Heart left ventricle (tissue), 16 donors: ENCODE measurements at regions of chr16 and their contacts with region 1.

Region 1: GRCh38 chr16:56964243-56965148 is 2.7 kb downstream of the CETP start:
- DNase-seq: peak; percentile 87 to 95 (median 88)
- ATAC-seq: peak; percentile 56 to 73 (median 68)
- H3K4me3 ChIP-seq: peak overlapping the region in 1 of 12 donors; percentile 12
- H3K27ac ChIP-seq: peak overlapping the region in 2 of 12 donors; percentile 37 to 78
- H3K4me1 ChIP-seq: peaks cover 9 to 63% (median 38%) of the 10 kb centered on the region in 12 donors
- H3K27me3 ChIP-seq: no peaks in the 10 kb centered on the region
- CTCF ChIP-seq: peak; percentile 80 to 100 (median 94)
- POLR2A ChIP-seq: no peak

Region 2: DNA sequence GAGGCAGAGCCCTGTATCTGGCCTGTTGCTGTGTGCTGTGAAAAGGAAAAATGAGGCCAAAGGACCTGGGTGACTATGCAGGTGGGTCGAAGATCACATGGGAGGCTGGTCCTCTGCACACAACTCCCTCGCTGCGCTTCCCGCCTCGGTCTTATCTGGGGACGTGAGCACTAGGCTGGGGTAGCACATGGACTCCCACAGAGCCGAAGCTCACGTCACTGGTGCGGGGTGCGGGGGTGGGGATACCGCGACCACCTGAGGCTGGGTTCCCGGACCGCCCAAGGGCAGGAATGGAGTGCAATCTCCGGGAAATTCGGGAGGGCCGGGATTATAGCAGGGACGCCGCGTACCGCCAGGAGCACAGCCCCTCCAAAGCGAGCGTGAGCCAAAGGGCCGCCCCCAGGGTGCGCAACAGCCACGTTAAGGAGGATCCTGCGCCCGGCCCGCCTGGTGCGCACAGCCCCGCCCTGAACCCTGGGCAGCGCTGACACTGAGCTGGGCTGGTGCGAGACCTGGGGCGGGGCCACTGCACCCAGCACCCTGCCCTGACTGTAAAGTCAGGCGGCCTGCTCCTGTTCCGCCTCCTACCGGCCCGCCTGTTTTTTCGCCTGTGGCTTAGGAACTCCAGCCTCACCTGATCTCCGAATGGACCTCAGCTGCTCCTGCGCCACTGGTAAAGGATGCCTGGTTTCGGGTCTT is 321.3 kb before region 1 on chr16:
- intact Hi-C with region 1: no loop called
- DNase-seq: peak; percentile 59 to 85 (median 79)
- ATAC-seq: peak; percentile 91 to 94 (median 92)
- H3K4me3 ChIP-seq: peak overlapping the region in 10 of 12 donors; percentile 24 to 55 (median 43)
- H3K27ac ChIP-seq: peak overlapping the region in 4 of 12 donors; percentile 9 to 41 (median 36)
- H3K4me1 ChIP-seq: peaks cover 0 to 26% (median 16%) of the 10 kb centered on the region in 12 donors
- H3K27me3 ChIP-seq: peaks cover 0 to 86% (median 31%) of the 10 kb centered on the region in 9 donors
- CTCF ChIP-seq: peak; percentile 15 to 58 (median 42)
- POLR2A ChIP-seq: no peak

Region 3: DNA sequence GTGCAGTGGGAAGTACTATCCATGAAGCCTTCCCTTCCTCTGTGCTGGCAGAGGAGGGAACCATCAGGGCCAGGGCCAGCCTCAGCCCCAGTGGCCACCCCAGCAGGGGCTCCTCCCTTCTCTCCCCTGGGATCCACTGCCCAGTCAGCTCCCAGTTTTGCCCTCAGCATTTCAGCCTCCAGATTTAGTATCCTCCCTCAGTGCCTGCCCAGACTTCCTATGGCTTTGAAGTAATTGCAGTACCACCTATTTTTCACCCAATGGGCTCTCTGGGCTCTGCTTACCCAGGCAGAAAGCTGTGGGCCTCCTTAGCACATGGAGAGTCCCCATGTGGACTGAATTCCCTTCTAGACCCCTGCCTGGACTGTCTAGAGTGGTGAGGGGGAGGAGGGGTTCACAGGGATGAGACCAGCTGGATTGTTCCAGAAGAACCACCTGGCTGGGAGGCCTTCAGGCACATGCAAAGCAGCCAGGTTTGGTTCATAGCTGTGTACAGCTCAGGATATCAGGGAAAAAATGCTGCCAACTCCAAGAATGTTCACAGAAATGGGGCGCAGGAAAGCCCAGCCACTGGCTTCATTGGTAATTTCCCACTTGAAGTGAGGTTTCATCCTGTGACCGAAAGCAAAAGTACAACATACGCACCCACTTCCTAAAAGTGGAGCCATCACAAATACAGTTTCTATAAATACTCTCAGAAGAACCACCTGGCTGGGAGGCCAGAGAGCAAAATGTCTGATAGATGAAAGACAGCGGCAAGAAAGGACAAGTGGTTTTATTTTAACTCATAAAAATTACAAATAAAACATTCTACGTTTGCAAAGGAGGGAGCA is 47.7 kb before region 1 on chr16:
- intact Hi-C with region 1: no loop called
- DNase-seq: no peak
- ATAC-seq: peak in 2 of 4 donors; percentile 33 to 56
- H3K4me3 ChIP-seq: no peak overlapping the region
- H3K27ac ChIP-seq: peak overlapping the region in 11 of 12 donors; percentile 27 to 81 (median 62)
- H3K4me1 ChIP-seq: peaks cover 0 to 59% (median 32%) of the 10 kb centered on the region in 12 donors
- H3K27me3 ChIP-seq: no peaks in the 10 kb centered on the region
- CTCF ChIP-seq: no peak
- POLR2A ChIP-seq: no peak

Region 4: DNA sequence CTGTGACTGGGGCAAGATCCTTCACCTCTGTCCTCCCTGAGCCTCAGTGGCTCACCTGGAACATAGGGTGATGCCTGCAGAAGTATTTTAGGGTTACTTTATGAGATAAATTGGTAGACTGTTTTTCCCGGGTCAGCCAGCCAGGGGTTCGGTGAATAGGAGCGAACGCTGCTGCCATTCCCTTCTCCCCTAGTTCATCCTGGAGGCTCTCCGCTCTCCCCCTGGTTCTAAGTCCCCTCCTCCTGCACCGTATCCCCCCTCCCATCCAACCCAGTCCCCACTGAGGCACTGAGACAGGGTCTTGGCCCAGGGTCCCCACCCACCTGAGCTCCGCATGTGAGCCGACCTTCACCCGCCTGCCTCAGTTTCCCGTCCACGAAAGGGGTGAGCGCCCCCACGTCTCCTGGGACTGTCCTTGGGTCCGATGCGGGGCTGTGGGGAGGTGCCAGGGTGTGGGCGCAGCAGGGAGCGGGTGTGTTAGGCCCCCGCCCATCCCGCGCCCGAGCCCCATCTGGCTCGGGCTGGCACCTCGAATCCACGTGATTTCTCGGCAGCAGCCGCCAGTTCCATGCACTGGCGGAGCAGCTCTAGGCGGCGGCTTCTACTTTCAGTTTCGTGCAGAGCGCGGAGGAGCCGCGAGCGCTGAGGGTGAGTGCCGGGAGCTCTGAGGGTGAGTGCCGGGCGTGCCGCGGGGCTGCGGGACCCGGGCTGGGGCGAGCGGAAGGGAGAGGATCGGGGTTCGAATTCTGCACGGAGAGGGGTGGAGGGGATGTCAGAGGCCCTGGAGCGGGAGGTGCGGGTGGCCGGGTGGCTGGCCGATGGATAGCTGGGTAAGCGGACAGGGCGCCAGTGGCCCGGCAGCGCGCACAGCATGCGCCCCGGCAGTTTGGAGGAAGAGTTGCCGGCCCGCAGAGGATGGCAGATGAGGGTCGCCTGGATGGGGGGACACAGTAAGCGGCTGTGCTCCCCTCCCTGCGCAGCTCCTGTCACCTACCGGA is 24.8 kb after region 1 on chr16 and contains the start of gene NLRC5:
- intact Hi-C with region 1: loop called in 1 of 10 experiments (anchors 2 kb)
- DNase-seq: peak; percentile 86 to 94 (median 90)
- ATAC-seq: peak; percentile 79 to 92 (median 86)
- H3K4me3 ChIP-seq: peak within 1 kb of the TSS; percentile 49 to 96 (median 84)
- H3K27ac ChIP-seq: peak within 1 kb of the TSS; percentile 28 to 96 (median 86)
- H3K4me1 ChIP-seq: peaks cover 0 to 87% (median 34%) of the 10 kb centered on the region in 12 donors
- H3K27me3 ChIP-seq: no peaks in the 10 kb centered on the region
- CTCF ChIP-seq: peak in 2 of 12 donors; percentile 2 to 7
- POLR2A ChIP-seq: peak in 1 of 2 donors; percentile 84
- total RNA-seq, gene NLRC5: 5.8 to 98.6 (median 9.9) TPM

Region 5: GRCh38 chr16:57017251-57017650 is 52.8 kb after region 1 on chr16:
- intact Hi-C with region 1: loop called in 2 of 10 experiments (anchors 2 to 5 kb)
- DNase-seq: no peak
- ATAC-seq: peak in 3 of 4 donors; percentile 25 to 65 (median 31)
- H3K4me3 ChIP-seq: no peak overlapping the region
- H3K27ac ChIP-seq: peak overlapping the region in 2 of 12 donors; percentile 13 to 37
- H3K4me1 ChIP-seq: peaks cover 0 to 42% (median 6%) of the 10 kb centered on the region in 12 donors
- H3K27me3 ChIP-seq: no peaks in the 10 kb centered on the region
- CTCF ChIP-seq: no peak
- POLR2A ChIP-seq: no peak

Region 6: DNA sequence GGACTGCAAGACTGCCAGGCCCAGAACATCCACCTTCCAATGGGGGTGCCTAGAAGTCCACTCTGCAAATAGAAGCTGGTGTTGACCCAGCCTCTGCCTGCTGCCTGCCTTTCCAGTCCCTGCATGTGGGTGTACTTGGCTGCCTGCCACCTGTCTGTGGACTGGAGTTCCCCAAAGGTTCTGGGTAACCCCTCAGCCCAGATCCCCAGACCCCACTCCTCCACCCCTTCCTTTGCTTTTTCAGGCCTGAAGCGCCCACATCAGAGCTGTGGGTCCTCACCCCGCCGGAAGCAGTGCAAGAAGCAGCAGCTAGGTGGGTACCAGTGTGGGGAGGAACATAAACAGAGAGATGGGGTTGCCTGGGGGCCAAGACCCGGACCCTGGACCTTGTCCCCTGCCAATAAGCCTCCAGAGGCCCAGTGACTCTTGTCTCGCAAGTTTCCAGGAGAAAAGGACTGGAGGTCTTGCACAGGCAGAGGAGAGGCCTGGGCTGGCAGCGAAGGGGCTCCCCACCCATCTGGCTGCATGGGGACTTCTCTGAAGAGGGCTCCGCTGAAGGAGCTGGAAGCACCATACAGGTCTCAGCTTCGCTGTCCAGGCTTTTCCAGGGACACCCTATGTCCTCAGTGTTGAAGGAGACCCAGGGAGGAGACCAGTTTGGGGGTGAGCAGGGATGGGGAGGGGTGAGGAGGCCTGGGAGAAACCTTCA is 59.2 kb after region 1 on chr16:
- intact Hi-C with region 1: loop called in 1 of 10 experiments (anchors 5 kb)
- DNase-seq: no peak
- ATAC-seq: no peak
- H3K4me3 ChIP-seq: no peak overlapping the region
- H3K27ac ChIP-seq: peak overlapping the region in 1 of 12 donors; percentile 37
- H3K4me1 ChIP-seq: peaks cover 0 to 28% (median 0%) of the 10 kb centered on the region in 12 donors
- H3K27me3 ChIP-seq: no peaks in the 10 kb centered on the region
- CTCF ChIP-seq: no peak
- POLR2A ChIP-seq: no peak

Region 7: DNA sequence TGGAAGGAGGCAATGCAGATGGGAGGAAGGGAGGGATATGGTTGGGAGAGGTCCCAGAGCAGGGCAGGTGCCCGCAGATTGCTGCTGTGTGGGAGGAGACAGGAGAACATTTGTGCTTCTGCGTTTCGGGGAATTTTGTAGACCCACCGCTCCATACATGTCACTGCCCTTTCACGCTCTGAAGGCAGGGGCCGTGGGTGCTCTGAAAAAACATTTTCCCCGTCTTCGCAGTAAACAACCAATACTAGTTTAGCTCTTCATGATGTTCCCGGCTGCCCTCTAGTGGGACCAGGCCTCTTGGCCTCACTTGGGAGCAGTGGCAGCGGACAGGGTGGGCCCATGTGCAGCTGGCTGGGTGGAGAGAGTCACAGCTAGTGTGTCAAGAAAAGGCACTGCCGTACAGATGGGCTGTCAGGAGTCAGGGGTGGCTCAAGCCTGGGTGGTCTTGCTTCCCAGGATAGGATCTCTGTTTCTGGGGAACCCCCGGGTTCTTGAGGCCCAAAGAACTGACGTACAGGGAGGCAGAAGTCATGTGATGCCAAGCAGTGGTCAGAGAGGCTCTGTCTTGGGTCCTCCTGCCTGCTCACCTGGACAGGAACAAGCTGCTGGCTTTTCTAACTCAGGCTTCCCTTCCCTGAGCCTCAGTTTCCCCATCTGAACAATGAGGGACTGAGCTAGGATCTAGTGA is 81.3 kb after region 1 on chr16:
- intact Hi-C with region 1: loop called in 9 of 10 experiments (anchors 1 to 10 kb)
- DNase-seq: peak; percentile 63 to 84 (median 67)
- ATAC-seq: peak; percentile 50 to 86 (median 78)
- H3K4me3 ChIP-seq: peak overlapping the region in 4 of 12 donors; percentile 9 to 29 (median 24)
- H3K27ac ChIP-seq: no peak overlapping the region
- H3K4me1 ChIP-seq: peaks cover 0 to 23% (median 6%) of the 10 kb centered on the region in 12 donors
- H3K27me3 ChIP-seq: no peaks in the 10 kb centered on the region
- CTCF ChIP-seq: peak; percentile 34 to 79 (median 62)
- POLR2A ChIP-seq: no peak

Region 8: DNA sequence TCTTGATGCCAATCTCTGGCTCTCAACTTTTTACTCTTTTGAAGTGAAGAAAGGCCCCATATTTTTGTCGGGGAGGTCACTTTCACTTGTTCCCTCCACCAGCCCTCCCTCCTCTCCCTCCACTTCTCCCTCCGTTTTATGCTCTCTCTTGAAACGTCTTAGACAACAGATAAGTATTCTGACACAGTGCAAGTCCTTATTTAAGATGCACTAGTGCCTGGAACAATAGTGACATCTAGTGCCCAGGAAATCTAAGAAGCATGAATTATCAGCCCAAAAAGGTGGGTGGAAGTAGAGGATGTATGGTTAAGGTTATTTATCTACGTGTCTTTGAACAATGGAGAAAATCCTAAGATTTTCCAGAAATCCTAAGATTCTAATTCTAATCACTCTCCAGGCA is 203.5 kb after region 1 on chr16:
- intact Hi-C with region 1: loop called in 2 of 10 experiments (anchors 5 to 10 kb)
- DNase-seq: no peak
- ATAC-seq: peak; percentile 61 to 84 (median 80)
- H3K4me3 ChIP-seq: no peak overlapping the region
- H3K27ac ChIP-seq: peak overlapping the region in 1 of 12 donors; percentile 82
- H3K4me1 ChIP-seq: peaks cover 0 to 23% (median 12%) of the 10 kb centered on the region in 12 donors
- H3K27me3 ChIP-seq: no peaks in the 10 kb centered on the region
- CTCF ChIP-seq: peak; percentile 41 to 76 (median 64)
- POLR2A ChIP-seq: no peak